ENCODE measurements at regions of chr6 and their contacts with region 1.

Region 1: GRCh38 chr6:19210849-19211590 is 626.1 kb upstream of the ID4 start:
- DNase-seq: peak; percentile 23
- ATAC-seq: peak; percentile 26

Region 2: GRCh38 chr6:18595774-18596530 is 615.1 kb before region 1 on chr6:
- intact Hi-C with region 1: loop called (anchors 10 kb)
- DNase-seq: no peak
- ATAC-seq: peak; percentile 83

Region 3: DNA sequence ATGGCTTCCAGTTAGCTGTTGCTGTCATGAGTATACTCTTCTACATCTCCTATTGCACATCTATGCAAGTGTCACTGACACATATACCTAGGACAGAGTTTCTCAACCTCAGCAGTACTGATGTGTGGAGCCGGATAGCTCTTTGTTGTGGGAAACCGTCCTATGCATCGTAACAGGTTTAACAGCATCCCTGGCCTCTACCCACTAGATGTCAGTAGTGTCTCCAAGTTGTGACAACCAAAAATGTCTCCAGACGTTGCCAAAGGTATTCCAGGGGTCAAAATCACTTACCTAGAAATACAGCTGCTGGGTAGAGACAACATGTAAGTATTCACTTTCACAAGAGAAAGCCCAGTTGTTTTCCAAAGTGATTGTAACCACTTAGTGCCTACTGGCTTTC is 186.3 kb before region 1 on chr6:
- intact Hi-C with region 1: loop called (anchors 5 kb)
- DNase-seq: no peak
- ATAC-seq: peak; percentile 44

Region 4: GRCh38 chr6:19035461-19036195 is 175.4 kb before region 1 on chr6:
- intact Hi-C with region 1: no loop called
- DNase-seq: no peak
- ATAC-seq: peak; percentile 41

Measured in Right ventricle myocardium inferior (tissue), 1 donor.